ENCODE measurements at regions of chr1 and their contacts with region 1.

Region 1: GRCh38 chr1:107782217-107782845 is 182.6 kb downstream of the VAV3 start:
- H3K4me3 Mint-ChIP-seq: no peak overlapping the region
- H3K27ac Mint-ChIP-seq: no peak overlapping the region
- H3K4me1 Mint-ChIP-seq: peaks cover 25% of the 10 kb centered on the region
- H3K27me3 Mint-ChIP-seq: no peaks in the 10 kb centered on the region

Region 2: GRCh38 chr1:107820805-107821204 is 38.5 kb after region 1 on chr1:
- intact Hi-C with region 1: no loop called
- H3K4me3 Mint-ChIP-seq: no peak overlapping the region
- H3K27ac Mint-ChIP-seq: no peak overlapping the region
- H3K4me1 Mint-ChIP-seq: peaks cover 12% of the 10 kb centered on the region
- H3K27me3 Mint-ChIP-seq: no peaks in the 10 kb centered on the region

Region 3: GRCh38 chr1:107877092-107877491 is 94.8 kb after region 1 on chr1:
- intact Hi-C with region 1: loop called (anchors 5 kb)
- H3K4me3 Mint-ChIP-seq: no peak overlapping the region
- H3K27ac Mint-ChIP-seq: peak overlapping the region; percentile 54
- H3K4me1 Mint-ChIP-seq: peaks cover 44% of the 10 kb centered on the region
- H3K27me3 Mint-ChIP-seq: no peaks in the 10 kb centered on the region

Region 4: DNA sequence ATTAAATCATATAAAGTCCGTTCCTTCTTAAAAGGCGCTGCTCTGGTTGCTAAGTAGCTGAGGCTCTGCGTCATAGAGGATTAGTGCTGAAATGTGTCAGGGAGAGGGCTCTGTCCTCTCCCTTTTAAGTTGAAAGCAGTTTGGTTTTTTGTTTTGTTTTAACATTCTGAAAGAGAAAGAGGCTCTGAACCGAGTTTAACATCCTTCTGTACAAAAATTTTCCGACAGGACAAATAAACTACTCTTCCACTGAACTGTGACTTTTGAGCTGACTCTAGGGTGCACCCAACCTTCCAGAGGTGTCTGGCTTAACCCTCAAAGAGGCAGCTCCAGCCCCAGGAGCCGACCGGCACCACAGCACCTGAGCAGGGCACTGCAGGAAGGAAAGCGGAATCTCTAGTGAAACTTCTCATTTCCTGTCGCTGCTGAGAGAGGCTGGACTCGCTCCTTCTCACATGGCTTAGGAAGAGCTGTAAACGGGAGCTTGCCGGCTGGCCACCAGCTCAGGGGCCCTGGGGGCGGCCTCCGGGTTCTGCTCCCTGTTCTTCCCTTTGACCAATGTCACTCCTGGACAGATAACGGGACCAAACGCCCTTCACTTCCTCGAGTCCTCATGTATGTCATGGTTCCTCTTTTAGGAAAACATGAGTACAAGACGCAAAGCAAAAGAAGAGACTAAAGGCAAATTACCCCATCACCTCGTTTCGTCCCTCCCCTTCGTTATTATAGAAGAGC is 181.4 kb after region 1 on chr1:
- intact Hi-C with region 1: loop called (anchors 5 kb)
- H3K4me3 Mint-ChIP-seq: peak overlapping the region; percentile 83
- H3K27ac Mint-ChIP-seq: peak overlapping the region; percentile 88
- H3K4me1 Mint-ChIP-seq: peaks cover 36% of the 10 kb centered on the region
- H3K27me3 Mint-ChIP-seq: no peaks in the 10 kb centered on the region

Region 5: DNA sequence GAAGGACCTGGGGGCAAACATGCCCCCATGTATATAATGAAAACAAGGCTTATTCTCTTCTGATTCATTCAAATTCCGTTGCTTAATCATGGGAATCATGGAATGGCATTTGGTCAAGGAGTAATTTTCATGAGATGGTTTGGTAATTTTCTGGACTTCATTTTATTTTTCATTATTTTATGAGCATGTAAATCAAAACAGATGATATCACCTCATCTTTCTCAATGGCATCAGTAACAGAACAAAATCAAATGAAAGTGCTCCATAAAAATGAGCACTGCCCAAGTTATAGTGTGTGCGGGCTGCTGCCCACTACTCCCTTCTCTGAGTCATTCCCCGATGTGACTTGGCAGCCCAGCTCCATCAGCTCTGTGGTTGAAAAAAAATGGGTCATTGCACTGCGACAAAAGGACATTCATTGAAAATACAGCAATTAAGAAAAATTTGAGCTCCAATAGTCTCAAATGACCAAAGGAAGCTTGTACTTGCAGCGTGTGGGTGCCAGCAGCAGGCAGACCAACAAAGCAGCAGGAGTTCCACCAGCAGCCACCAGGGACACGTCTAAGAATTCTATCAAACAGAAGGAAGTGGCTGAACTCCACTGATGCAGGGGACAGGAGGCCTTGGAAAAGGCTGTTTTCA is 267.0 kb after region 1 on chr1:
- intact Hi-C with region 1: loop called (anchors 5 kb)
- H3K4me3 Mint-ChIP-seq: peak overlapping the region; percentile 33
- H3K27ac Mint-ChIP-seq: no peak overlapping the region
- H3K4me1 Mint-ChIP-seq: peaks cover 49% of the 10 kb centered on the region
- H3K27me3 Mint-ChIP-seq: no peaks in the 10 kb centered on the region

Region 6: GRCh38 chr1:108125312-108126138 is 343.2 kb after region 1 on chr1:
- intact Hi-C with region 1: loop called (anchors 1 kb)
- H3K4me3 Mint-ChIP-seq: no peak overlapping the region
- H3K27ac Mint-ChIP-seq: no peak overlapping the region
- H3K4me1 Mint-ChIP-seq: peaks cover 8% of the 10 kb centered on the region
- H3K27me3 Mint-ChIP-seq: no peaks in the 10 kb centered on the region

Region 7: GRCh38 chr1:108199781-108200570 is 417.6 kb after region 1 on chr1 and contains the start of gene SLC25A24:
- intact Hi-C with region 1: loop called (anchors 10 kb)
- H3K4me3 Mint-ChIP-seq: peak within 1 kb of the TSS; percentile 96
- H3K27ac Mint-ChIP-seq: peak within 1 kb of the TSS; percentile 99
- H3K4me1 Mint-ChIP-seq: peaks cover 49% of the 10 kb centered on the region
- H3K27me3 Mint-ChIP-seq: peaks cover under 1% of the 10 kb centered on the region